ENCODE measurements at regions of chr20 and their contacts with region 1.

Region 1: GRCh38 chr20:57654363-57654997 is 34.3 kb upstream of the ZBP1 start:
- DNase-seq: peak; percentile 71 to 80 (median 73)
- H3K4me3 ChIP-seq: no peak overlapping the region
- H3K27ac ChIP-seq: no peak overlapping the region
- H3K4me1 ChIP-seq: no peaks in the 10 kb centered on the region
- H3K27me3 ChIP-seq: no peaks in the 10 kb centered on the region
- CTCF ChIP-seq: peak; percentile 81

Region 2: GRCh38 chr20:57573890-57574289 is 80.6 kb before region 1 on chr20:
- intact Hi-C with region 1: no loop called
- DNase-seq: no peak
- H3K4me3 ChIP-seq: no peak overlapping the region
- H3K27ac ChIP-seq: no peak overlapping the region
- H3K4me1 ChIP-seq: peaks cover 9 to 16% (median 12%) of the 10 kb centered on the region in 3 donors
- H3K27me3 ChIP-seq: no peaks in the 10 kb centered on the region
- CTCF ChIP-seq: no peak

Region 3: GRCh38 chr20:57769756-57770155 is 115.3 kb after region 1 on chr20:
- intact Hi-C with region 1: no loop called
- DNase-seq: peak in 1 of 5 donors; percentile 10
- H3K4me3 ChIP-seq: no peak overlapping the region
- H3K27ac ChIP-seq: no peak overlapping the region
- H3K4me1 ChIP-seq: no peaks in the 10 kb centered on the region
- H3K27me3 ChIP-seq: no peaks in the 10 kb centered on the region
- CTCF ChIP-seq: no peak

Region 4: DNA sequence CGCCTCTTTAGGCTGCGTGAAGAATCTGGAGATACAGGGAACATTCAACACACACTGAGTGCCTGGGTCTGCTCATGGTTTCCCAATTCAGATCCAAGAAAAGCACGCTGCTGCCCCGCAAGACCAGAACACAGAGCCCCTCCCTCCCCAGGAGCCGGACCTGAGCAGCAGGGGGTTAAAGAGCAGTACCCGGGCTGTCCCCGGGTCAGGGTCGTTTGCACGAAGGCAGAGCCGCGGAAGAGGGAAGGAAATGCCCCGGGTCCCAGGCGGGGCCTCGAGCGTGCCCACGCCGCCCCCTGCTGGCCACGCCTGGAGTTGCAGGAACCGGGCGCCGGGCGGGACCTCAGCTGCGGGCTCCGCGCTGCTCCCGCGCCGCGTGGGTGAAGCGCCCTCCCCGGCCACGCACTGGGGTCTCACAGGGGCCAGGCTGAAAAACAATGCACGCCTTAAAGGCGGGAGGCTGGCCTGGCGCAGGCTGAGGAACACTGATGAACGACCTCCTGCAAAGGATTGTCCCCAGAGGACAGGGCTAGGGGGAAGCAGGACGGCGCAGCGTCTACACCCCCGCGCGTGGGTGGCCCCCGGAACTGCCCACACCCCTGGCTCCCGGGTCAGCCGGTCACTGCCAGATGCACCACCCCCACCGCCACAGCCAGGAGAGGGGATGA is 525.1 kb after region 1 on chr20:
- intact Hi-C with region 1: loop called (anchors 10 kb)
- DNase-seq: peak; percentile 62 to 80 (median 78)
- H3K4me3 ChIP-seq: peak overlapping the region in 2 of 3 donors; percentile 7 to 46
- H3K27ac ChIP-seq: no peak overlapping the region
- H3K4me1 ChIP-seq: peaks cover 0 to 7% (median 5%) of the 10 kb centered on the region in 3 donors
- H3K27me3 ChIP-seq: peaks cover 2% of the 10 kb centered on the region
- CTCF ChIP-seq: peak; percentile 91